Mammary epithelial cell (primary cell): ENCODE measurements at regions of chr15 and their contacts with region 1.

Region 1: GRCh38 chr15:100918034-100918689 is 995 bp upstream of the LRRK1 start:
- DNase-seq: peak; percentile 77
- H3K4me3 ChIP-seq: peak overlapping the region; percentile 64 to 72 (median 67)
- H3K27ac ChIP-seq: peak overlapping the region; percentile 48
- H3K4me1 ChIP-seq: peaks cover 39% of the 10 kb centered on the region
- H3K27me3 ChIP-seq: no peaks in the 10 kb centered on the region
- CTCF ChIP-seq: peak; percentile 83 to 94

Region 2: DNA sequence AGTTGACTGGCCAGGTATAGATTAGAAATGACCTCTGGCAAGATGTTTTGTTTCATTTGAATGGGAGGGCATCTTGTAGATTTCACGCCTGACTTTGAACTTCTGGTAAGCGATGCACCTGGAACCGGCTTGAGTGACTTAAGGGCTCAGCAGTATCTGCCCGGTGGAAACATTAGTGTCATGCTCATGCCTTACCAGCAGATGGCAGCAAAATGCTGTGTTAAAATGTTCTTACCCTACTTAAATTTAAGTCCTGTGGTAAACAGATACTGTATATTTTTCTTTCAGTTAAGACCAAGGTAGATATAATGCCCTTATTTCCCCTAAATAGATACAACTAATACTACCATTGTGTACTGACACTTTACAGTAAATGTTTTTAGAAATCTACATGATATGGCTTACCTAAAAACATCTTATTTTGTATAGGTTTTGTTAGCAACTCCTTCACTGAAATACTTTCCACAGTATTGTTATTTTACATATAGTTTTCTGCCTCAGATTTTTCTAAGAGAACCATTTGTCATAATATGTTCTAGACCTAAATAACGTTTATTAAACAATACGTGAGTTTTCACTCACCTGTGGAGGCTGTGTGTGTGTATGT is 290.3 kb before region 1 on chr15:
- CTCF ChIA-PET with region 1: no interaction called
- dilution Hi-C with region 1: no loop called
- in situ Hi-C with region 1: no loop called
- intact Hi-C with region 1: loop called (anchors 1 kb)
- DNase-seq: peak; percentile 64
- H3K4me3 ChIP-seq: no peak overlapping the region
- H3K27ac ChIP-seq: peak overlapping the region; percentile 5
- H3K4me1 ChIP-seq: no peaks in the 10 kb centered on the region
- H3K27me3 ChIP-seq: no peaks in the 10 kb centered on the region
- CTCF ChIP-seq: peak; percentile 73